Right cardiac atrium (tissue), 5 donors: ENCODE measurements at regions of chr4 and their contacts with region 1.

Region 1: DNA sequence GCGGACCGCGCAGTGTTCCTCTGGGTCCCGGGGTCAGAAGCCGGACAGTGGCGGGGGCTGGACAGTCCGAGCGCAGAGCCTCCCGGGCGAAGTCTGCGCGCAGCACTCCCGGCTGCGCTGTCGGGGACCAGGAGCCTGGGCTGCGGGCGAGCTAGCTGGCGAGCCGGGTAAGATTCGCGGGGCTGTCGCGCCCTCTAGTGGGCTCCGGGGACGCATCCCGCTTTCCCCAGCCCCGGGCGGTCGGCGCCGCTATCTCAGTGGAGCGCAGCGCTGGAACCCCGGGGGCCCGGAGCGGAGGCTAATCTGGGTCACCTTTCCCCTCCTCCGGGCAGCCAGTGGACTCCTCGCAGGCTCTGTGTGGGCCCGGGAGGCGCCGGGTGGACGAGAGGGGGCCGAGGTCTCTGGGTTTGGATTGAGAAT is 4.2 kb downstream of the PDGFRA start:
- DNase-seq: peak; percentile 89 to 94 (median 94)
- ATAC-seq: peak; percentile 87 to 92
- H3K4me3 ChIP-seq: peak overlapping the region; percentile 53
- H3K27ac ChIP-seq: peak overlapping the region; percentile 11
- H3K4me1 ChIP-seq: no peaks in the 10 kb centered on the region
- H3K27me3 ChIP-seq: no peaks in the 10 kb centered on the region

Region 2: DNA sequence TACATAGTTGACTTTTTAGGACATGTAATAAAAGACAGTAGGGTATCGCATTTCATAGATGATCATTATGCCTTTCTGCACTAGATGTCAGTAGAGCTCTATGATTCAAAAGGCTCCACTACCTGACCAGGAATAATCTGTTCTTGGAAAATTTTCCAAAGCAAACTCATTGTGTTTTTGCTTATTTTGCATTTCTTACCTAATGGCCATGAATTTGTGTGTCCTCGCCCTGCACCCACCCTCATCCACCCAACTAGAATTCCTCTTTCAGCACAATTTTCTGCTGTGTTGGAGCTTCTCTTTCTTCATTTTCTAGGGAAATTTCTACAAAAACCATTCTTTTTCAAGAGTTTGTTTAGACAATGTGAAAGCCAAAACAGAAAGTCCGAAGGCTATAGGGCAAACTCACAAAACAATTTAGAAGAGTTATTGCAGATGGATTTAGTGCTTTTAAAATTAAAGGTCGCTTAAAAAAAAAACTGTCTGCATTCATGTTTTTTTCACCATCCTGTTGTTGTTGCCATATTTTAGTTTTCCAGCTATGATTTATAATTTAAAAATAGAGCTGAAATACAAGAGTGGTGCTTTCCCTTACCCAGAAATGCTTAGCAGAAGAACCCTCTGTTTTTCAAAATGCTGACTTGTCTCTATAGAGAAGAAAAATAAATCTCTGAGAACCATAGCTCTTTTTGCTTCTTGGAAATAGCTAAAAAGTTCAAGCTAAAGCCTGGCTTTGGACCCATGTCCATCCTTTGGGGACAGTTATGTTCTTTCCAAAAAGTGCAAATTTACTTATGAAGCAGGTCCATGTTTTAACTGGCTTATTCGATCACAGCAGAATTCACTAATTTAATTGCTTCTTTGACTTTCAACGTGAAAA is 1998.5 kb before region 1 on chr4:
- intact Hi-C with region 1: loop called in 1 of 4 experiments (anchors 10 kb)
- DNase-seq: peak in 1 of 3 donors; percentile 40
- ATAC-seq: peak; percentile 80 to 84
- H3K4me3 ChIP-seq: no peak overlapping the region
- H3K27ac ChIP-seq: no peak overlapping the region
- H3K4me1 ChIP-seq: no peaks in the 10 kb centered on the region
- H3K27me3 ChIP-seq: no peaks in the 10 kb centered on the region

Region 3: DNA sequence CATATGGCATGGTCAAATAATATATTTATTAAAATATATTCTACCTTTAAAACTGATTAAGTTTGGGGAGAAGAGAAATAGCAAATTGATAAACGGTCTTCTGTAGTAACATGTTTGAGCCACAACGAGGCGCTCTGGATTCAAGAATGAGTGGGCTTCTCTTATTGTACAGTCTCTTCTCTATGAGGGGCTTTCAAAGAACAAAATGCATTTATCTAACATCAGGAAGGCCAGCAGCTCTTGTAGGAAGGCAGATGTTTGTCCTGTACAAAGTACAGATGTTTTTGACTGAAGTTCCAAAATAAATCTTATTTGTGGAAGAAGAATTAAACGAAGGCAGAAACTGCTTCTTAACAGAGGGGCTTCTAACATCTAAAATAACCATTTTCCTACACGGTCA is 1217.6 kb before region 1 on chr4:
- intact Hi-C with region 1: loop called in 2 of 4 experiments (anchors 5 to 10 kb)
- DNase-seq: peak in 1 of 3 donors; percentile 59
- ATAC-seq: peak in 1 of 2 donors; percentile 44
- H3K4me3 ChIP-seq: no peak overlapping the region
- H3K27ac ChIP-seq: no peak overlapping the region
- H3K4me1 ChIP-seq: peaks cover 6% of the 10 kb centered on the region
- H3K27me3 ChIP-seq: no peaks in the 10 kb centered on the region

Region 4: GRCh38 chr4:53507671-53508286 is 725.5 kb before region 1 on chr4:
- intact Hi-C with region 1: loop called in 1 of 4 experiments (anchors 10 kb)
- DNase-seq: peak; percentile 90 to 94 (median 92)
- ATAC-seq: peak; percentile 97 to 98
- H3K4me3 ChIP-seq: no peak overlapping the region
- H3K27ac ChIP-seq: peak overlapping the region; percentile 69
- H3K4me1 ChIP-seq: peaks cover 3% of the 10 kb centered on the region
- H3K27me3 ChIP-seq: no peaks in the 10 kb centered on the region

Region 5: GRCh38 chr4:53929955-53930798 is 303.1 kb before region 1 on chr4:
- intact Hi-C with region 1: loop called in 1 of 4 experiments (anchors 5 kb)
- DNase-seq: peak; percentile 77 to 85 (median 78)
- ATAC-seq: peak; percentile 89 to 92
- H3K4me3 ChIP-seq: no peak overlapping the region
- H3K27ac ChIP-seq: no peak overlapping the region
- H3K4me1 ChIP-seq: no peaks in the 10 kb centered on the region
- H3K27me3 ChIP-seq: no peaks in the 10 kb centered on the region

Region 6: GRCh38 chr4:54516556-54517215 is 283.4 kb after region 1 on chr4:
- intact Hi-C with region 1: no loop called
- DNase-seq: no peak
- ATAC-seq: peak in 1 of 2 donors; percentile 31
- H3K4me3 ChIP-seq: no peak overlapping the region
- H3K27ac ChIP-seq: no peak overlapping the region
- H3K4me1 ChIP-seq: no peaks in the 10 kb centered on the region
- H3K27me3 ChIP-seq: no peaks in the 10 kb centered on the region